AG04449 (cell line): ENCODE measurements at regions of chr1 and their contacts with region 1.

Region 1: GRCh38 chr1:16625497-16626408 is 12.4 kb upstream of the NBPF1 start:
- DNase-seq: no peak
- H3K4me3 ChIP-seq: no peak overlapping the region
- CTCF ChIP-seq: no peak

Region 2: DNA sequence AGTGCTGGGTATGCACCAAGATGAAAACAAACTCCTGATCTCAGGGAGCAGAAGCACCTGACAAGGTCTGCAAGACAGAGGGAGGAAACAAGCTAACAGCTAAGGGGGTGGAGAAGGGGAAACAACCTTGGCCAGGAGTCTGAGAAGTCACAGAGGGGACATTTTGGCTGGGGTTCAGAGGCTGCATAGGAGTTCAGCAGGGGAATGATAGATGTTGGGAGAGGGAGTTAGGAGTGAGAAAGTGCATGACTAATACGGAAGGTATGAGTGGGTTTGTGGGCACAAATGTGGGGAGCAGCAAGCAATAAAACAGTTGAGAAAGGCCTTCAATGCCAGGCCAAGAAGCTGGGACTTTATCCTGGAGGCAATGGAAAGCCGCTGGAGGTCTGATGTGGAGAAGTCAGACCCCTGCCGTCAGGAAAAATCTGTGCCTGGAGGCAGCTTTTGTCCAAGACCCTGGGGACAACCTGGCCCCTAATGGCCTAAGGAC is 486.2 kb before region 1 on chr1:
- CTCF ChIA-PET with region 1: no interaction called
- POLR2A ChIA-PET with region 1: no interaction called
- DNase-seq: no peak
- H3K4me3 ChIP-seq: no peak overlapping the region
- CTCF ChIP-seq: no peak

Region 3: GRCh38 chr1:16521288-16521583 is 104.5 kb before region 1 on chr1:
- CTCF ChIA-PET with region 1: no interaction called
- POLR2A ChIA-PET with region 1: no interaction called
- DNase-seq: no peak
- H3K4me3 ChIP-seq: no peak overlapping the region
- CTCF ChIP-seq: no peak

Region 4: DNA sequence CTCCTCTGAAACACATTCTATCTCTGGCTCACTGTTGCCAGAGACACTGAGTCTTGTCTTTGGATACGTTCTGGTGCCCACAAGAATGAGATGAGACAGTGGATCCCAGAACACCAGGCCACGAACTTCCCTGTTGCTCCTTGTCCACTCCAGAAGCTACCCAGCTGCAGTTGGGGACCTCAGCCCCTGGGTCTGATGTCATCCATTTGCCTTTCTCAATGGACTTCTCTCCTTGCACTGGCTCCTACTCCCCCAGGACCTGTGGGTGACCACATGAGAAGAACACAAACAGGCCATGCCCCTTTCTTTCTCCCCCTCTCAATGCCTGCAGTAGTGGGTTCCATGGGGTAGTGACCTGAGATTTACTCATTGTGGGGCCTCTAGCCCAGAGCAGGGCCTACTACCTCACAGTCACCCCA is 18.3 kb before region 1 on chr1:
- CTCF ChIA-PET with region 1: interaction called, 71 read pairs
- POLR2A ChIA-PET with region 1: interaction called, 5 read pairs
- DNase-seq: no peak
- H3K4me3 ChIP-seq: no peak overlapping the region
- CTCF ChIP-seq: no peak

Region 5: DNA sequence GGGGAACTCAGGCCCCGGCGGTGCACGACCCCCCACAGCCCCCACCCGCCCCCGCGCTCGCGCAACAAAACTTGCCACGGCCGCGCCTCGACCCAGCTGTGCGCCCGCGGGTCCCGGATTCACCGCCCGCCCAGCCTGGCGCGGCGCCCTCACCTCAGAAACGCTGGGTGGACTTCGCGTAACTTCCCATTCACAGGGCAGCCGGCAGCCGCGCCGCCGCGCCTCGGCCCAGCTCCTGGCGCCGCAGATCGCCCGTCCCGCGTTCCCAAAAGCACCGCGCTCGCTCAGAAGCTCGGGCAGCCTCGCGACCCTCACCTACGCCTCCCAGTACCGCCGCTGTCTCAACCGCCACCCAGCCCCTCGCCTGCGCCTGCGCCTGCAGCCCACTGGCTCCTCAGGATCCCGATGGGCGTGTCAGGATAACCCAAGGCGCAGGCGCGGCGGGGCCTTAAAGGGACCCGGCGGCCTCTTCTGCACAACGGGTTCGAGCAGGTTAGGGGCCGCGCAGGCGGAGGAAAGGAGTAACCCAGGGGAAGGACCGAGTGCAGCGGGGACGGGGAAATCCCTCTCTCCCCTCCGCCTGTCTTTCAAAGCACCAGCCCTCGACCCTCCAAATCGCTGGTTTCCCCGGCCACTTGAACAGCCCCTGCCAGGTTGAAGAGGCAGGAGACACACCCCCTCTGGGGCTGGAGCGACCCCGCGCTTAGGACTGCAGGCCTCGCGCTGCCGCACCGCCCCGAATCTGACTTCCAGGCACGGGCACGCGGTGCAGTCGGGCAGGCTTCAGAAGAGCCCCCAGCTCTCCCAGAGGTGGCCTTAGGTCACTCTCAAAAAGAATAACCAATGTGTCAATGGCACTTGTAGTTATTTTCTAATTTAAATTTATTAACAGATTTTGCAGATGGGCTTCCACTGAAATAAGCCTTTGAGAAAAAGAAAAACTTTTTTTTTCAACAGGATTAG is 12.3 kb before region 1 on chr1 and contains the start of gene NBPF1:
- CTCF ChIA-PET with region 1: interaction called, 71 read pairs
- POLR2A ChIA-PET with region 1: interaction called, 5 read pairs
- DNase-seq: peak; percentile 53
- H3K4me3 ChIP-seq: peak within 1 kb of the TSS; percentile 84
- CTCF ChIP-seq: no peak